Activated CD4-positive, alpha-beta memory T cell treated with anti-CD3 and anti-CD28 coated beads for 36 hours (primary cell): ENCODE measurements at regions of chr6 and their contacts with region 1.

Region 1: DNA sequence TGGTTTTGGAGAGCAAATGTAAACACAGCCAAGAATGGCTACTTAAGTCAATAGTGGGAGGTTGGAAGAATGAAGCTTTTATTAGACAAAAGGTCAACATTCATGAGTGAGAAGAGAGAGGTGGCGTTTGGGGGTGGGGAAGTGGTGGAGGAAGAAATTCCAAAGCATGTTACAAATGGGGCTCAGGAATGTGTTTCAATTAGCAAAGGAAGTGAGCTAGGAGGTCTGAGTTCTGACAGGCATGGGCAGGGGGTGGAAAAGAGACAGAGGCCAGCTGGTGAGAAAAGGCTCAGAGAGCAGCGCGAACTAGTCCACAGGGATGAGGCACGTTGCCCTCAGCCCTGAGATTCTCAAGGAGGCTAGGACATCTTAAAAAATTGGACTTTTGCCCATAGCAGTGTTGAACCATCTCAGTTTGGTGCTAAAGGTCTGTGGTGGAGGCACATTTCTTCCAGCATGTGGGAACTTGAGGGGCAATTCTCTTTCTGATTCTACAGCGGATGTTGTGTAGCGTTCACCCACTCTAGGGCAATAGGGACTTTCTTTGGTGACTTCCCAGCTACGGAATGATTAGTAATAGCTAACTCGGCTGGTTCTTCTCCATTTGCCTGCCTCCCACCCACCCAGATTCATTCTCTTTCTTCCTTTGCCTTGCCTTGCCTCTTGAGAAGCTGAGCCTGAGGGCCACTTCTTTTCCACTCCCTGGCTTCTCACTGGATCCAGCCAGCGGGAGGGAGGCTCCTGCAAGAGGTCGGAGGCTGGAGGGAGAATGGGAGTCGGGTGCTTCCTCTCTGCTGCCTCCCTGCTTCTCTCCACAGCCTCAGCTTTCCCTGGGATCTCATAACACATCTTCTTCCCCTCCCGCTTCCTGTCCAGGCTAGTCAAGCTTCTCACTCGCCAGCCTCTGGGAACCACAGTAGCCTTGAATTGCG is 45.1 kb upstream of the NEDD9 start:
- DNase-seq: peak; percentile 72
- H3K4me3 Mint-ChIP-seq: peak overlapping the region; percentile 49
- H3K27ac Mint-ChIP-seq: peak overlapping the region; percentile 93
- H3K4me1 Mint-ChIP-seq: peaks cover 59% of the 10 kb centered on the region
- H3K27me3 Mint-ChIP-seq: no peaks in the 10 kb centered on the region

Region 2: GRCh38 chr6:11093589-11094410 is 183.7 kb before region 1 on chr6 and contains the start of gene SMIM13:
- CTCF ChIA-PET with region 1: no interaction called
- POLR2A ChIA-PET with region 1: interaction called, 3 read pairs
- intact Hi-C with region 1: loop called (anchors 5 kb)
- DNase-seq: peak; percentile 97
- H3K4me3 Mint-ChIP-seq: peak within 1 kb of the TSS; percentile 97
- H3K27ac Mint-ChIP-seq: peak within 1 kb of the TSS; percentile 98
- H3K4me1 Mint-ChIP-seq: peaks cover 27% of the 10 kb centered on the region
- H3K27me3 Mint-ChIP-seq: no peaks in the 10 kb centered on the region
- total RNA-seq, gene SMIM13: 7.2 to 9.5 TPM

Region 3: DNA sequence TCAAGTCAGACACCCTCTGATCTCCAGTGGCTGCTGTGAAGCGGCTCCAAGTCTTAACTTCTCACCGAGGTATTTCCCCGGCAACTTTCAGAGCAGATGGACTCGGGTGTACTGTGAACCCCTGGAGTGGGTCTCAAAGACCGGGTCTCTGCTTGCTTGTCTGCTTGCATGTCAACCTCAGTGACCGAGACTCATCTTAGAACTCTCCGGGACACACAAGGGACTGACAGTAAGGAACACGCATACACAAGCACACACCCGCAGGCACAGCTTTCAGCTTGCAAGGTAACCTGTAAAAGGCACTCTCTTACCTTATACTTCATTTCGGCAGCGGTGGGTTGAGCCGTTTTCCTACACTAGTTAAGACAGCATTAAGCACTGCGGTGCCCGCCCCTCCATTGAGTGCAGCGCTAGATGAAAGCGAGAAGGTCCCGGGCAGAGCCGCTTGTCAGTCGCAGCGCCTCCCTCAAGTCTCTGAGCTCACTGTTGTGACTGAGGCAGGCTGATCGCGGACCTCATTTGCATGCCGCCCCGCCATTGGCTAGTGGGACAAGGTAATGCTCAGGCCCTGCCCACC is 45.3 kb before region 1 on chr6 and contains the start of gene NEDD9:
- CTCF ChIA-PET with region 1: interaction called, 3 read pairs
- POLR2A ChIA-PET with region 1: interaction called, 51 read pairs
- intact Hi-C with region 1: loop called (anchors 1 kb)
- DNase-seq: peak; percentile 98
- H3K4me3 Mint-ChIP-seq: peak within 1 kb of the TSS; percentile 81
- H3K27ac Mint-ChIP-seq: peak within 1 kb of the TSS; percentile 96
- H3K4me1 Mint-ChIP-seq: peaks cover 65% of the 10 kb centered on the region
- H3K27me3 Mint-ChIP-seq: no peaks in the 10 kb centered on the region
- total RNA-seq, gene NEDD9: 26.6 to 31.5 TPM

Region 4: GRCh38 chr6:11291582-11291981 is 14.0 kb after region 1 on chr6:
- CTCF ChIA-PET with region 1: no interaction called
- POLR2A ChIA-PET with region 1: interaction called, 9 read pairs
- intact Hi-C with region 1: loop called (anchors 1 kb)
- DNase-seq: peak; percentile 50
- H3K4me3 Mint-ChIP-seq: no peak overlapping the region
- H3K27ac Mint-ChIP-seq: peak overlapping the region; percentile 56
- H3K4me1 Mint-ChIP-seq: peaks cover 27% of the 10 kb centered on the region
- H3K27me3 Mint-ChIP-seq: no peaks in the 10 kb centered on the region

Region 5: DNA sequence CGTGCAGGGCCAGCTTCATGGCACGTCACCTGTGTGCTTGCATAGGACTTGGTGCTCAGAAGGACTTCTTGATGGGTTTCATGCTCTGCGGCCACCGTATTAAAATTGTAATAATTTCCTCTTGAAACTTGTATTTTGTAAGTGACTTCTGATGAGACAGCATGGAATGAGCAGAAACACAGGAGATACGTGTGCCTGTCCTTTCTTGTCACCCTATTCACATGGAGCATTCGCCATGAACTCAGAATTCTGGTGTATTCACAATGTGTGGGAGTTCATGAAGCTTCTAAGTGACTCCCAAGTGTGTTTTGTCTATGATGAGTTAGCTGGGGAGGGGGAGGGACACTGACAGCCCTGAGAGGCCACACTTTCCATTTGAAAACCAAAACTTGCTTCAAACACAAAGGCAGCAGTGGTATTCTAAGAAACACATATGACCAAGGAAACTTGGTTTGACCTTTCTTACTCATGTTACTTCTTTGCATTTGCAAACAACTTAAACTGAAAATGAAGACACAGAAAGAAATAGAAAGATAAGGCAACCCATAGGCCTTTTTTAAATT is 47.0 kb after region 1 on chr6:
- CTCF ChIA-PET with region 1: interaction called, 5 read pairs
- POLR2A ChIA-PET with region 1: interaction called, 7 read pairs
- intact Hi-C with region 1: loop called (anchors 1 kb)
- DNase-seq: peak; percentile 83
- H3K4me3 Mint-ChIP-seq: peak overlapping the region; percentile 57
- H3K27ac Mint-ChIP-seq: peak overlapping the region; percentile 85
- H3K4me1 Mint-ChIP-seq: peaks cover 73% of the 10 kb centered on the region
- H3K27me3 Mint-ChIP-seq: no peaks in the 10 kb centered on the region

Region 6: DNA sequence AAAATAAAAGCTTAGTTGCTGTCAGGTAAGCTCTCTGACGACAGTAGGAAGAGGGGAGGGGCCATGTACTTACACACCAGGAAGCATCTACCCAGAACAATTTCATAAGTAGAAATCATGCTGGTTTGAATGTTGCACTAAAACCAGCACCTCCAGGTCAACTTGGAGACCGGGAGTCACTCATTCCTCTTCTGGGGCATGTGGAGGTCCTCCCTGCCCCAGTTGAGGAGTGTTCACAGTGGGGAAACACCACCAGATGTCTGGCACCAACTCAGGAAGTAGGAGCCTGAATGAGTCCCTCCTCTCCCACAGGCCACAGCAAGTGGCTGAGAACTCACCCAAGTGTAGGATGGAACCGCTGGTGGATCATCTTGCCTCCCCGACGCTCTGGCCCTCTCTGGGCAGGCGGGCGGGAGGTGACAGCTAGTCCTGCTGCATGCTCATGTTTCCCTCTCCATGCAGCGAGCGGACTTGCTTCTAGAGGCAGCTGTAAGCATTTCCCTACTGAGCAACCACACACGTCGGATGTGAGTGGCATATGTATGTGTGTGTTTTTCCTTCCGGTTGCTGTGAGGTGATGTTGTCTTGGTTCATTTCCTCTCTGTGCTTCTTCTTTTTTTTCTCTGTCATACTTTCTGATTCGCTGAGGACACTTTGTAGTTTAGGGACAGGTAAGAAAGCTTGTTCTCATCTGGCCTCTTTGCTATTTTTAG is 104.4 kb after region 1 on chr6:
- CTCF ChIA-PET with region 1: interaction called, 6 read pairs
- POLR2A ChIA-PET with region 1: interaction called, 13 read pairs
- intact Hi-C with region 1: loop called (anchors 2 kb)
- DNase-seq: peak; percentile 82
- H3K4me3 Mint-ChIP-seq: peak overlapping the region; percentile 85
- H3K27ac Mint-ChIP-seq: peak overlapping the region; percentile 95
- H3K4me1 Mint-ChIP-seq: peaks cover 58% of the 10 kb centered on the region
- H3K27me3 Mint-ChIP-seq: no peaks in the 10 kb centered on the region

Region 7: GRCh38 chr6:11460001-11460668 is 182.6 kb after region 1 on chr6:
- CTCF ChIA-PET with region 1: no interaction called
- POLR2A ChIA-PET with region 1: interaction called, 7 read pairs
- intact Hi-C with region 1: loop called (anchors 1 kb)
- DNase-seq: peak; percentile 23
- H3K4me3 Mint-ChIP-seq: peak overlapping the region; percentile 57
- H3K27ac Mint-ChIP-seq: peak overlapping the region; percentile 90
- H3K4me1 Mint-ChIP-seq: peaks cover 31% of the 10 kb centered on the region
- H3K27me3 Mint-ChIP-seq: no peaks in the 10 kb centered on the region